Mammary epithelial cell (primary cell): ENCODE measurements at regions of chr1 and their contacts with region 1.

Region 1: GRCh38 chr1:7501084-7501491 is 270.0 kb upstream of the VAMP3 start:
- DNase-seq: no peak
- H3K4me3 ChIP-seq: no peak overlapping the region
- H3K27ac ChIP-seq: no peak overlapping the region
- H3K4me1 ChIP-seq: no peaks in the 10 kb centered on the region
- H3K27me3 ChIP-seq: peaks cover 2% of the 10 kb centered on the region
- CTCF ChIP-seq: no peak

Region 2: GRCh38 chr1:7255303-7256058 is 245.6 kb before region 1 on chr1:
- CTCF ChIA-PET with region 1: no interaction called
- dilution Hi-C with region 1: loop called (anchors 5 kb)
- in situ Hi-C with region 1: no loop called
- intact Hi-C with region 1: no loop called
- DNase-seq: no peak
- H3K4me3 ChIP-seq: no peak overlapping the region
- H3K27ac ChIP-seq: no peak overlapping the region
- H3K4me1 ChIP-seq: no peaks in the 10 kb centered on the region
- H3K27me3 ChIP-seq: no peaks in the 10 kb centered on the region
- CTCF ChIP-seq: no peak

Region 3: DNA sequence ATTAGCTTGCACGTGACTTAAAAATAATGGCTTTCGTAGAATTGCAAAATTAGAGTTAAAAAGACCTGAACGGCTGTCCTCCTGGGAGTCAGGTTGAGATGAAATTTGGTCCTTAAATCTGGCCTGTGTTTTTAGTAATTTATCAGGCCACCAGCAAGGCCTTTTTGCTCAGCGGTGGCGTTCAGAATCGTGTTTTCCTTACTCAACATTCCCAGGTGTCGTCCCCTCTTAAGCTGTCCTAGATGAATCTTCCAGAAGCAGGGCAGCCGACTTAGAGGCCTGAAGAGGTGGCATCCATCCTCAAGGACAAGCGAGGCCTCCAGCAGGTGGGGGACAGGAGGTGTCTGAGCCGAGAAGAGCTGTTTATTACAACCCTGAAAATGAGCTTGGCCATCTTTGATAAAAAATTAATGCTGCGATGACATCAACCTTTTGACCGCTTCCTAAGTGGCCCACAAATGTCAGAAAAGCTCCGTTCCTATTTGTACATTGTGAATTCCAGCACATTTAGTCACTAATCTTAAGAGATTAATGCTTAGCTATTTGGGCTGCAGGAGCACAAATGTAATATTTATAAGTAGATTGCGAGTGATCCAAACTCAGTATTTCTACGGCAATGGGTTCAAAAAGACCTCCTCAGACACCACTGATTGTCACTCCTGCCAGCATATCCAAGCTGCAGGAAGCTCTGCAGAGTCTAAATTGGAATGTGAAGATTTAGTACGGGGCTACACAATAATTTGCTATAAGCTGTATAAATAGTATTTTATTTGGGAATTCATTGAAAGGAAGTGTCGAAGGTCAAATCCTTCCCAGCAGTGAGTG is 74.1 kb before region 1 on chr1:
- CTCF ChIA-PET with region 1: no interaction called
- dilution Hi-C with region 1: no loop called
- in situ Hi-C with region 1: no loop called
- intact Hi-C with region 1: no loop called
- DNase-seq: no peak
- H3K4me3 ChIP-seq: no peak overlapping the region
- H3K27ac ChIP-seq: no peak overlapping the region
- H3K4me1 ChIP-seq: no peaks in the 10 kb centered on the region
- H3K27me3 ChIP-seq: peaks cover 8% of the 10 kb centered on the region
- CTCF ChIP-seq: no peak

Region 4: GRCh38 chr1:7440154-7440870 is 60.8 kb before region 1 on chr1:
- CTCF ChIA-PET with region 1: no interaction called
- dilution Hi-C with region 1: loop called (anchors 5 kb)
- in situ Hi-C with region 1: no loop called
- intact Hi-C with region 1: no loop called
- DNase-seq: no peak
- H3K4me3 ChIP-seq: no peak overlapping the region
- H3K27ac ChIP-seq: no peak overlapping the region
- H3K4me1 ChIP-seq: no peaks in the 10 kb centered on the region
- H3K27me3 ChIP-seq: no peaks in the 10 kb centered on the region
- CTCF ChIP-seq: no peak

Region 5: DNA sequence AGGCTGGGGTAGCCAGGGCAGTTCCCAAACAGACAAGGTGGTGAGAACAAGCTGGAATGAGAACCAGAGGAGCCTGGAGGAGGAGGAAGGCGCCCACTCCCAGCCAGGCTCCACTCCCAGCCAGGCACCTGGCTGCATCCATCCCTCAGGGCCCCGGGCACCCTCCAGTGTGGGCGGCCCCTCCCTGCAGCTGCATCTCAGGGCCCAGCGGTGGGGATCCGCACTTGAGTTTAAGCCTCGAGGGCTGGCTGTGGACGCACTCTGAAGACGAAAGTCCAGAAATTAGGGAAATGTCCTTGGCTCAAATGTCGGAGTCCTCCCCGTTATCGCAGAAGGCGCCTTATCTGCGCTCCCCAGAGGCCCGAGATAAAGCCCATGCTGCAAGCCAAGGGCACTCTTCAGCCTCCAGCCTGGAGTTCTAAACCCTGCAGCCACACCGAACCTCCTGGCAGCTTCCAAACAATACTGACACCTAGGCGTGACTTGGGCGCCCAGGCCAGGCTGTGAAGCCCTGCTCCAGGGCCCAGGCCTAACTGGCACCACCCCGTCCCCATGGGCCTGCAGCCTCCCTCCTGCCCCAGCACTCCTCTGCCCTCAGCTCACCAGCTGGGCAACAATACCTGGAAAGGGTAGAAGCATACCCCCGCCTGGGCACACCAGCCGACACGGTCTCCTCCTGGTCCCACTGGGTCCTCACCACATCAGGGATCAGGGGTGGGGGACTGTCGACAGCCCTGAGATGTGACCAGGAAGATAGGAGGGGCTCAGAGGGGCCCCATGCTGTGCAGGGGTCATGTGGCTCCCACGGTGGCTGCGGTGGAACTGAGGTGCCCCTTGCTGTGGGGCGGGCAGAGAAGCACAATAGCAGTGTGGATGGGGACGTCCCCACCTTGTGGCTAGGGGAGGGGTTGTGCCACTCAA is 85.2 kb after region 1 on chr1:
- CTCF ChIA-PET with region 1: no interaction called
- dilution Hi-C with region 1: loop called (anchors 5 kb)
- in situ Hi-C with region 1: no loop called
- intact Hi-C with region 1: no loop called
- DNase-seq: no peak
- H3K4me3 ChIP-seq: no peak overlapping the region
- H3K27ac ChIP-seq: no peak overlapping the region
- H3K4me1 ChIP-seq: no peaks in the 10 kb centered on the region
- H3K27me3 ChIP-seq: no peaks in the 10 kb centered on the region
- CTCF ChIP-seq: no peak

Region 6: GRCh38 chr1:7704214-7705047 is 203.3 kb after region 1 on chr1:
- CTCF ChIA-PET with region 1: no interaction called
- dilution Hi-C with region 1: no loop called
- in situ Hi-C with region 1: no loop called
- intact Hi-C with region 1: no loop called
- DNase-seq: peak; percentile 88
- H3K4me3 ChIP-seq: peak overlapping the region; percentile 41 to 50 (median 50)
- H3K27ac ChIP-seq: no peak overlapping the region
- H3K4me1 ChIP-seq: peaks cover 5% of the 10 kb centered on the region
- H3K27me3 ChIP-seq: peaks cover 20% of the 10 kb centered on the region
- CTCF ChIP-seq: no peak